ENCODE measurements at regions of chr5 and their contacts with region 1.

Region 1: DNA sequence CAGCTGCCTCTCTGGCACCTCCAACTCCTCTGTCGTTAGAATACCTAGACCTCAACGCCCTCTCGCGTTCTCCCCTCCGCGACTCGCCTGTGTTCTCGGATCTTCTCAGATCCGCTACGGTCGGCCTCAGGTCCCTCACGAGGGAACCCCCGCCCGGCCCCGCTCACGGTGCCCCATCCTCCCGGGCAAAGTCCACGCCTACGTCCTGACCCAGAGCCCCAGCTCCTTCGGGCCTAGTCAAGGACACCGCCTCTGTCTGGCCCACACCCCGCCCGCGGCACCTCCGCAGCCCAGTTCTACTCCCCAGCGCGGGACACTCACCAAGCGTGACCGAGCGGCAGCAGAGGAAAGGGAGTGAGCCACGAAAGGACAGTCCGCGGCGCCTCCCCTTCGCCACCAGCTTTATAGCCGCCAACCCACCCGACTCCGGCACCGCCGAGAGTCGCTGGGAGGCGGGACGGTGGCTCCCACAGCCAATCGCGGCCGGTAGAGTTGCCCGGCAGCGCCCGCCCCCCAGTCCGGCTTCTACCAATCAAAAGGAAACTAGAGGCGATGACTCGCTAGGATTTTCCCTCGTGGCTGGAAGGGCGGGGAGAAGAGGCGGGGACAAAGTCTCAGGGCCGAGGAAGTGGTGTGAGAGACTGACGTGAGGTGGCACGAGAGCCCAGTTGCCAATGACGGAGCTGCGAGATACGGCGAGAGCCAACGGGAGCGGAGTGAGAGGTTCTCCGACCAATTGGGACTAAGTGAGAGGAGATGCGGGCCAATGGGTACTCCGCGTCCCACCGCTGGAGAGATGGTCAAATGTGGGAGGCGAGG is at the start of gene HMGCS1:
- DNase-seq: peak; percentile 100
- ATAC-seq: peak; percentile 92
- H3K4me3 Mint-ChIP-seq: peak within 1 kb of the TSS; percentile 99
- H3K27ac Mint-ChIP-seq: peak within 1 kb of the TSS; percentile 96
- H3K4me1 Mint-ChIP-seq: peaks cover 62% of the 10 kb centered on the region
- H3K27me3 Mint-ChIP-seq: no peaks in the 10 kb centered on the region
- total RNA-seq, gene HMGCS1: 91.4 to 121 TPM

Region 2: GRCh38 chr5:43096916-43097315 is 216.3 kb before region 1 on chr5:
- CTCF ChIA-PET with region 1: no interaction called
- DNase-seq: no peak
- ATAC-seq: no peak
- H3K4me3 Mint-ChIP-seq: no peak overlapping the region
- H3K27ac Mint-ChIP-seq: no peak overlapping the region
- H3K4me1 Mint-ChIP-seq: no peaks in the 10 kb centered on the region
- H3K27me3 Mint-ChIP-seq: no peaks in the 10 kb centered on the region

Region 3: GRCh38 chr5:43294226-43294625 is 19.0 kb before region 1 on chr5:
- CTCF ChIA-PET with region 1: no interaction called
- DNase-seq: no peak
- ATAC-seq: no peak
- H3K4me3 Mint-ChIP-seq: no peak overlapping the region
- H3K27ac Mint-ChIP-seq: no peak overlapping the region
- H3K4me1 Mint-ChIP-seq: peaks cover 7% of the 10 kb centered on the region
- H3K27me3 Mint-ChIP-seq: no peaks in the 10 kb centered on the region

Region 4: GRCh38 chr5:43389679-43390329 is 76.6 kb after region 1 on chr5:
- CTCF ChIA-PET with region 1: interaction called, 16 read pairs
- DNase-seq: peak; percentile 56
- ATAC-seq: peak; percentile 86
- H3K4me3 Mint-ChIP-seq: no peak overlapping the region
- H3K27ac Mint-ChIP-seq: no peak overlapping the region
- H3K4me1 Mint-ChIP-seq: peaks cover 17% of the 10 kb centered on the region
- H3K27me3 Mint-ChIP-seq: no peaks in the 10 kb centered on the region